GM13977 (cell line): ENCODE measurements at regions of chr2 and their contacts with region 1.

Region 1: GRCh38 chr2:137467246-137467862 is 496.9 kb upstream of the HNMT start:
- DNase-seq: peak; percentile 16
- CTCF ChIP-seq: peak; percentile 67

Region 2: DNA sequence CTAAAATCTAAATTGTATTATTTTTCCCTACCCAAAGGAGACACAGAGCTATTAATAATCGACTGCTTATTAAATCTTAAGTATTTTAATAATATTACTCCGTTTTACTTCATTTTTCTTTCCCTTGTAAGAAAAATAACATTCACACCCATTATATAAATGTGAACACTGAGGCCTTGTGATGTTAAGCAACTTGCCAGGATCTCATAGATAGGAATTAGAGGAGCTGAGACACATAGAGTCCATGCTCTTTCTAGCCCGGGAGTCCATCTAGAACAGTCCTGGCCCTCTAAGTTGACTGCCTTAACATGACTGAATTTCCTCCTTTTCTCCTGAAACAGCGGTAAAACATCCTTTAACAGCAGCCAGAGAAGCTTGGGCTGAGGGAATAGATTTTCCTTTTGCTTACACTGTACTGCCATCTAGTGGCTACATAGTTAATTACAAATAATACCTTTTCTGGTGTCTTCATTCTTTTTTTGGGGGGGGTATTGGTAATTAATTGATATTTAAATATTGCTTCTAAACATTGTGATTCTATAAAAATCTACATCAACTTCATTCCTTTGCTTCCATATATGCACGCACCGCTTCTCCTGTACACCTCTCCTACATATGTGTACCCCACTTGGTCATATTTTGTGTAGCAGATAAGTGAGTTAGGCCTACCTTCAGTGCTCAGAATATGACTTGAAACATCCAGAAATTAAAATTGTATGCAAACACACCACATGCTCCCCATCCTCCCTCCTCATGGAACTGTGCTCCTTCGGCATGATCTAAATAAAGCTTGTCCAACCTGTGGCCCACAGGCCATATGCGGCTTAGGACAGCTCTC is 371.1 kb after region 1 on chr2:
- in situ Hi-C with region 1: loop called (anchors 25 kb)
- DNase-seq: peak; percentile 21
- CTCF ChIP-seq: peak; percentile 51